HepG2 (cell line): ENCODE measurements at regions of chr3 and their contacts with region 1.

Region 1: DNA sequence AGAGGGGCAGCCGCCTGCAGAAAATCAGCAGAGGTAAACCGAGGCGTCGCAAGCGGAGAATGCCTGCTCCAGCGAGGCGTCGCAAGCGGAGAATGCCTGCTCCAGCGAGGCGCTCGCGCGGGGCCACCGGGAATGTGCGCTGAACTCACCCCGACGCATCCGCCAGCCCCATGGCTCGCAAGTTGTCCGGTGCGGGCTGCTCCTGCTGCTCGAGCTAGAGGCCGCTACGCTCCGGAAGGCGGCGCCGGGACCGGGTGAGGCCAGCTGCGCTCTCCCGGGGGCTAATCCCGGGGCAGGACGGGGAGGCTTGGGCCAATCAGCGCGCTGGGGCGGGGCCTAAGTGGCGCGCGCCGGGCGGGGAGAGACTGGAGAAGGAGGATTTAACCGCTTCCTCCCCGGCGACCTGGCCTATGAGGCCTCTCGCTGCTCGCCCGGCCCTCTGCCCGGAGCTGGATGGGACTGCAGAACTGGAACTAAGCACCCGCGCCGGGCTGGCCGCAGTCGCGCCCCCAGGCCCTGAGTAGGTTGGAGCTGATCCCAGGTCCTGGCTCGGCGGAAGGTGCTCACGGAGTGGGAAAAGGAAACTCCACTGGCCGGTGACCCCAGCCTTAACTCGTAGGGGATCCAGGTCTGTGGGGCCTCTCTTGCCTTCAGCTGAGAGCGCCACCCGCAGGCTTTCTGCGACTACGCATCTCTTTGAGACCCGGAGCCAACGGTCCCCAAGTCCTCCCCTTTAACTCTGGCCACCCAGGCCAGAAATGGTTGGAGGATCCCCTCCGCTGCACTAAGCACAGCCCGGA is at the start of gene SLC26A6:
- DNase-seq: peak; percentile 93
- ATAC-seq: peak; percentile 91
- H3K4me3 ChIP-seq: peak within 1 kb of the TSS; percentile 71 to 96 (median 93)
- H3K27ac ChIP-seq: peak within 1 kb of the TSS; percentile 74
- H3K4me1 ChIP-seq: peaks cover 64% of the 10 kb centered on the region
- H3K27me3 ChIP-seq: no peaks in the 10 kb centered on the region; a peak in 1 of 5 replicates
- CTCF ChIP-seq: peak; percentile 85
- EP300 ChIP-seq: peak in 1 of 2 experiments; percentile 8; a peak in 1 of 4 replicates
- POLR2A ChIP-seq: peak in 1 of 2 experiments; percentile 83; a peak in 2 of 4 replicates
- RAD21 ChIP-seq: peak; percentile 77
- total RNA-seq, gene SLC26A6: 10.3 and 40.7 TPM in 2 replicates

Region 2: GRCh38 chr3:48492543-48493501 is 142.6 kb before region 1 on chr3:
- CTCF ChIA-PET with region 1: no interaction called
- POLR2A ChIA-PET with region 1: no interaction called
- in situ Hi-C with region 1: no loop called
- intact Hi-C with region 1: no loop called
- DNase-seq: no peak
- ATAC-seq: no peak
- H3K4me3 ChIP-seq: no peak overlapping the region
- H3K27ac ChIP-seq: no peak overlapping the region
- H3K4me1 ChIP-seq: 0 out of 2 replicates have a peak, but pooled peaks cover under 1% of the 10 kb centered on the region
- H3K27me3 ChIP-seq: no peaks in the 10 kb centered on the region
- CTCF ChIP-seq: no peak
- EP300 ChIP-seq: no peak
- POLR2A ChIP-seq: no peak
- RAD21 ChIP-seq: no peak

Region 3: GRCh38 chr3:48556793-48557626 is 78.4 kb before region 1 on chr3 and contains the start of gene PFKFB4:
- CTCF ChIA-PET with region 1: no interaction called
- POLR2A ChIA-PET with region 1: interaction called, 24 read pairs
- in situ Hi-C with region 1: no loop called
- intact Hi-C with region 1: loop called (anchors 2 kb)
- DNase-seq: peak; percentile 98
- ATAC-seq: peak; percentile 79
- H3K4me3 ChIP-seq: peak within 1 kb of the TSS; percentile 76 to 98 (median 92)
- H3K27ac ChIP-seq: peak within 1 kb of the TSS; percentile 77
- H3K4me1 ChIP-seq: peaks cover 88% of the 10 kb centered on the region
- H3K27me3 ChIP-seq: no peaks in the 10 kb centered on the region; a peak in 1 of 5 replicates
- CTCF ChIP-seq: peak; percentile 55
- EP300 ChIP-seq: peak in 1 of 2 experiments; percentile 34; a peak in 1 of 4 replicates
- POLR2A ChIP-seq: peak in 1 of 2 experiments; percentile 28; a peak in 2 of 4 replicates
- RAD21 ChIP-seq: no peak
- total RNA-seq, gene PFKFB4: 6.4 and 7.1 TPM in 2 replicates

Region 4: GRCh38 chr3:48609088-48610005 is 26.1 kb before region 1 on chr3 and contains the start of gene UQCRC1:
- CTCF ChIA-PET with region 1: interaction called, 13 read pairs
- POLR2A ChIA-PET with region 1: interaction called, 30 read pairs
- in situ Hi-C with region 1: no loop called
- intact Hi-C with region 1: loop called (anchors 2 kb)
- DNase-seq: peak; percentile 85
- ATAC-seq: peak; percentile 98
- H3K4me3 ChIP-seq: peak within 1 kb of the TSS; percentile 77 to 98 (median 96)
- H3K27ac ChIP-seq: peak within 1 kb of the TSS; percentile 68
- H3K4me1 ChIP-seq: peaks cover 58% of the 10 kb centered on the region
- H3K27me3 ChIP-seq: no peaks in the 10 kb centered on the region; a peak in 1 of 5 replicates
- CTCF ChIP-seq: peak; percentile 98
- EP300 ChIP-seq: no peak
- POLR2A ChIP-seq: peak; percentile 84 to 95
- RAD21 ChIP-seq: peak; percentile 85
- total RNA-seq, gene UQCRC1: 273 and 316 TPM in 2 replicates

Region 5: GRCh38 chr3:48623851-48624547 is 11.4 kb before region 1 on chr3:
- CTCF ChIA-PET with region 1: no interaction called
- POLR2A ChIA-PET with region 1: interaction called, 140 read pairs
- in situ Hi-C with region 1: no loop called
- intact Hi-C with region 1: no loop called
- DNase-seq: peak; percentile 93
- ATAC-seq: peak; percentile 71
- H3K4me3 ChIP-seq: peak overlapping the region; percentile 8 to 41 (median 23); a peak in 4 of 6 replicates
- H3K27ac ChIP-seq: peak overlapping the region; percentile 93
- H3K4me1 ChIP-seq: peaks cover 72% of the 10 kb centered on the region
- H3K27me3 ChIP-seq: no peaks in the 10 kb centered on the region
- CTCF ChIP-seq: 0 out of 2 replicates have a peak, but pooled peaks have one; percentile 7
- EP300 ChIP-seq: peak in 1 of 2 experiments; percentile 81; a peak in 2 of 4 replicates
- POLR2A ChIP-seq: no peak; a peak in 1 of 4 replicates
- RAD21 ChIP-seq: no peak

Region 6: GRCh38 chr3:48663415-48664312 is 28.2 kb after region 1 on chr3:
- CTCF ChIA-PET with region 1: no interaction called
- POLR2A ChIA-PET with region 1: interaction called, 40 read pairs
- in situ Hi-C with region 1: no loop called
- intact Hi-C with region 1: no loop called
- DNase-seq: peak; percentile 96
- ATAC-seq: peak; percentile 86
- H3K4me3 ChIP-seq: peak overlapping the region; percentile 50 to 77 (median 58); a peak in 5 of 6 replicates
- H3K27ac ChIP-seq: peak overlapping the region; percentile 96
- H3K4me1 ChIP-seq: peaks cover 21% of the 10 kb centered on the region
- H3K27me3 ChIP-seq: no peaks in the 10 kb centered on the region
- CTCF ChIP-seq: peak; percentile 87
- EP300 ChIP-seq: peak in 1 of 2 experiments; percentile 63; a peak in 3 of 4 replicates
- POLR2A ChIP-seq: no peak; a peak in 1 of 4 replicates
- RAD21 ChIP-seq: peak; percentile 32; the same call in 1 of the 2 replicates